Activated B cell treated with CpG ODN at 0.5 μM for 24 hours (primary cell): ENCODE measurements at regions of chr2 and their contacts with region 1.

Region 1: GRCh38 chr2:10079234-10079869 is 859 bp downstream of the CYS1 start:
- DNase-seq: peak; percentile 30
- ATAC-seq: peak; percentile 51
- H3K4me3 Mint-ChIP-seq: peak overlapping the region; percentile 81
- H3K27ac Mint-ChIP-seq: no peak overlapping the region
- H3K4me1 Mint-ChIP-seq: peaks cover 12% of the 10 kb centered on the region
- H3K27me3 Mint-ChIP-seq: peaks cover 67% of the 10 kb centered on the region
- CTCF ChIP-seq: no peak

Region 2: GRCh38 chr2:10097352-10098148 is 18.2 kb after region 1 on chr2:
- CTCF ChIA-PET with region 1: interaction called, 81 read pairs
- POLR2A ChIA-PET with region 1: interaction called, 3 read pairs
- intact Hi-C with region 1: no loop called
- DNase-seq: peak; percentile 25
- ATAC-seq: peak; percentile 81
- H3K4me3 Mint-ChIP-seq: no peak overlapping the region
- H3K27ac Mint-ChIP-seq: no peak overlapping the region
- H3K4me1 Mint-ChIP-seq: peaks cover 2% of the 10 kb centered on the region
- H3K27me3 Mint-ChIP-seq: peaks cover 14% of the 10 kb centered on the region
- CTCF ChIP-seq: peak; percentile 16

Region 3: DNA sequence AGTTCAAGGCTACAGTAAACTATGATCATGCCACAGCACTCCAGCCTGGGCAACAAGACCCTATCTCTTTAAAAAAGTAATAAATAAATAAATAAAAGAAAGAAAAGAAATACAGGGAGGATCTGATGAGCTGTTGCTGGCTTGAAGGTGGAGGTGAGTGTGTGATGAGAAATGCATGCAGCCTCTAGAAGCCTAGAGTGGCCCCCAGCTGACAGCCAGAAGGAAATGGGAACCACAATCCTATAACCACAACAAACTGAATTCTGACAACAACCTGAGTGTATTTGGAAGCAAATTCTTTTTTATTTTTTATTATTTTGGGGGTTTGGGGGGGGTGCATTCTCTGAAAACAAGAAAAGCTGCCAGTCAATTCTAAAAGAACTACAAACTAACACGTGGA is 595.8 kb after region 1 on chr2:
- CTCF ChIA-PET with region 1: no interaction called
- POLR2A ChIA-PET with region 1: no interaction called
- intact Hi-C with region 1: no loop called
- DNase-seq: no peak
- ATAC-seq: no peak
- H3K4me3 Mint-ChIP-seq: no peak overlapping the region
- H3K27ac Mint-ChIP-seq: no peak overlapping the region
- H3K4me1 Mint-ChIP-seq: no peaks in the 10 kb centered on the region
- H3K27me3 Mint-ChIP-seq: no peaks in the 10 kb centered on the region
- CTCF ChIP-seq: no peak